ENCODE measurements at regions of chr9 and their contacts with region 1.

Region 1: DNA sequence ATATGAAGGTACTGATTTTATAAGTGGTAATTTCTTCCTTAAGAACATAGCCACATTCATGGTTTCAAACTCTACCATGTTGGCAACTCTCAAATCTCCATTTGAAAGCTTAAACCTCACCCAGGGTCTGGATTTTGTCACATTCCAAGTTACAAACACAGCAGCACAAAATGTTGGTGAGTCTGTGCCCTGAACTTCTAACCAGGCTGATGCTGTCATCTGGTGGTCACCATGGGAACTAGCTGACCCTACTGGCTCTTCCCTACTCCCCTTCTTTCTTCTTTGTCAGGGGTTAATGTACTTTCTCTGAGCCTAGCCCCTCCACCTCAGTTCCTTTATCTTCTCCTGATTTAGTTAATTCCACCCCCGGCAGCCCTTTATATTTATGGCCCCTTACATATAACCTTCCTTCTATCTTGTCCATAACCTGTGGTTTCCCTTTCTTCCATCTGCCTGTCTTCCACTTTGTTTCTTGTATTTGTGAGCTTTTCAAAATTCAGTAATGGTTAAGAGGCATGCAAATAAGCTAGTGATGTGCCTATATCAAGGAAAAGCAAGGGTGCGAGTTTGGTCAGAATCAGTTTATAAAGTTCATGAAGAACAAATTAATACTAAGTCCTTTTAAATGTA is 35.9 kb downstream of the TGFBR1 start:
- DNase-seq: peak; percentile 37
- CTCF ChIP-seq: peak; percentile 86

Region 2: DNA sequence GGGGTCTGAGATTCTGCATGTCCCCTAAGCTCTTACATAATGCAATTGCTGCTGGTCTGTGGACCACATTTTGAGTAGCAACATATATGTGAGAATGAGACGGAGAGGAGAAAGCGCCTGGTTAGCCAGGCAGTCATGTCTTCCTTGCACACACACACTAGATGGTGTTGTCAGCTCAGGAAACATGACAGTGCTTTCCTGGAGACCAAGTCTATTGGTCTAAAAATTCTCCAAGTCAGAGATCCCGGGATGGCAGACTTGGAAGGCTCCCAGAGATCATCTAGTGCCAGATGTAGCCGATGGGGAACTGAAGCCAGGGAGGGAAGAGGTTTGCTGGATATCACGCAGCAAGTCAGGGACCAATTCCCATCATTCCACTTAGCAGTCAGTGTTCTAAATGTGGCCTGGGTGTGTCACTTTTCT is 279.9 kb before region 1 on chr9:
- in situ Hi-C with region 1: loop called (anchors 25 kb)
- DNase-seq: no peak
- CTCF ChIP-seq: no peak

Region 3: DNA sequence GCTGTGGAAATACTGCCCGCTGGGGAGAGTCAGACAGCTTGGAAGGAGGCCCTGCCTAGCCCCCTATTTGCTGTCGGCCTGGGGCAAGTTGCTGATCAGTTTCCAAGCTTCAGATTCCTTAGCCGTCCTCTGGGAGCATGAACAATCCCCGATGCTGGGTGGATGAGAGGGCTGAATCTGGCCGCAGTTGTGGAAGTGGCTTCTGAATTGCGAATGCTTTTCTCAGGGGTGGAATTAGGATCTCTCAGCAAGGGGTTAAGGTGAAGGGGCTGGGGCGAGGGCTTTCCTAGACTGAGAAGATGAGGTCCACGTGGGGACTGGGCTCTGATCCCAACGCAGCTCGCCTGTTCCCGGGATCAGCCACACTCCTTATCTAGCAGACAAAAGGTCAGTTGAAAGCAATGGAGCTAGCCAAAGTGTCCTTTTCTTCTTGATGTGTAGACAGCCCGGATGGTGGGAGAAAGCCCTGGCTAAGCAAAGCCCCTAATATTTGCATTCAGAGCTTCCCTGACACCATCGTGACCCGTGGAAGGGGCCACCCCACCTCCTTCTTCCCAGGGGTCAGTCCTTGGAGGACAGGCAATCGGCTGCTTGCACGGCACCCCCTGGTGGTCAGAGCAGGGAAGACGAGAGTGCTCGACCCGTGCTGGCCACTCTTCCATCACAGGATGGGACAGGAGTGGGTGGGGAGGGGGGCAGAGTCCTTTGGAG is 142.2 kb before region 1 on chr9:
- in situ Hi-C with region 1: loop called (anchors 10 kb)
- DNase-seq: peak; percentile 75
- CTCF ChIP-seq: peak; percentile 90

Region 4: DNA sequence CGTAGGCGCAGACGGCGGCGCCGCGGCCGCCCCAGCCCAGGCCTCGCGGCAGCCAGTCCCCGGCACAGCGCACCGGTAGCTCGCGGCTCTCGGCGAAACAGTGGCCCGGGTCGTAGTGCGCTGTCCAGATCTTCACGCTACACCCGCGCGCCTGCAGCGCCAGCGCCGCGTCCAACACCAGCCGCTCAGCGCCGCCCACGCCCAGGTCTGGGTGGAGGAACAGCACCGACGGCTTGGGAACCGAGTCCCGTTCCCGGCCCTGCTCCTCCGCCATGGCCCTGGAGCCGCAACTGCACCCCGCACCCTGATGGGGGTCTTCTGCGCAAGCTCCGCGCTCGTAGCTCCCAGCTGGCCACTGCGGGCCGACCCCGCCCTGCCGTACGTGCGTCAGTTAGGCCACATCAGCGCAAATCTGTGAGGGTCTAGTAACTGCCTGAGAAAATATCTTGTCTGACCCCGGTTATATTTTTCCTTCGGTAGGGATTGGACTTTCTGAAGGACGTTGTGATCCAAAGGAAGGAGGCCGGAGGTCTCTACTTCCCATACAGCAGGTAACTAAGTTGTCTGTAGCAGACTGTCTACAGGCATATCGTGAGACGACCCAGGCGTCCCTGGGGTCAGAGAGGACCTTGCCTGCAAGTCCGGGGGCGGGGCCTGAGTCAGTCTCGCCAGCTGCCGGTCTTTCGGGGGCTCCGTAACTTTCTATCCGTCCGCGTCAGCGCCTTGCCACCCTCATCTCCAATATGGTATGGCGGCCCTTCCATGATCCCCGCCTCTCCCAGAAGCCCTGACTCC is 81.0 kb after region 1 on chr9 and contains the starts of genes ALG2 and SEC61B:
- in situ Hi-C with region 1: no loop called
- DNase-seq: peak; percentile 96
- CTCF ChIP-seq: no peak

Region 5: GRCh38 chr9:99244344-99245260 is 103.8 kb after region 1 on chr9:
- in situ Hi-C with region 1: no loop called
- DNase-seq: peak; percentile 56
- CTCF ChIP-seq: no peak